PC-3 (cell line): ENCODE measurements at regions of chr15 and their contacts with region 1.

Region 1: GRCh38 chr15:80816049-80816655 is 37.0 kb downstream of the CEMIP start:
- DNase-seq: no peak
- ATAC-seq: no peak
- H3K4me3 ChIP-seq: no peak overlapping the region
- H3K27ac ChIP-seq: no peak overlapping the region
- H3K4me1 ChIP-seq: no peaks in the 10 kb centered on the region
- H3K27me3 ChIP-seq: no peaks in the 10 kb centered on the region
- CTCF ChIP-seq: no peak

Region 2: DNA sequence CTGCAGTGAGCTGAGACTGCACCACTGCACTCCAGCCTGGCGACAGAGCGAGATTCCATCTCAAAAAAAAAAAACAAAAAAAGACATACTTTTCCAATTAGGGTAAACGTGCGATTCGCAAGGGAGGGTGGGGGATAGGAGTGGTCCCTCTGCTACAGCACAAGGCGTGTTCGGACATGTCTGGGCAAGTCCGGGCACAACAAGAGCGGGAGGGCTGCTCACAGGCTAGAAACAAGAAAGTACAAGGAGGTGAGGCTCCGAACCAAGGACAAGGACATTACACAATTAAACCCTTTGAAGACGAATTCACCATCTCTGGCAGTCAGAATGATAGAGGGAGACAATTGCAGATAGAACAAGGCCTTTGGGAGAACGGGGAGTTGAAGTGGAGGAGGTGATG is 813.0 kb before region 1 on chr15:
- CTCF ChIA-PET with region 1: no interaction called
- POLR2A ChIA-PET with region 1: interaction called, 11 read pairs
- intact Hi-C with region 1: no loop called
- DNase-seq: no peak
- ATAC-seq: no peak
- H3K4me3 ChIP-seq: no peak overlapping the region
- H3K27ac ChIP-seq: no peak overlapping the region
- H3K4me1 ChIP-seq: no peaks in the 10 kb centered on the region
- H3K27me3 ChIP-seq: no peaks in the 10 kb centered on the region
- CTCF ChIP-seq: no peak

Region 3: DNA sequence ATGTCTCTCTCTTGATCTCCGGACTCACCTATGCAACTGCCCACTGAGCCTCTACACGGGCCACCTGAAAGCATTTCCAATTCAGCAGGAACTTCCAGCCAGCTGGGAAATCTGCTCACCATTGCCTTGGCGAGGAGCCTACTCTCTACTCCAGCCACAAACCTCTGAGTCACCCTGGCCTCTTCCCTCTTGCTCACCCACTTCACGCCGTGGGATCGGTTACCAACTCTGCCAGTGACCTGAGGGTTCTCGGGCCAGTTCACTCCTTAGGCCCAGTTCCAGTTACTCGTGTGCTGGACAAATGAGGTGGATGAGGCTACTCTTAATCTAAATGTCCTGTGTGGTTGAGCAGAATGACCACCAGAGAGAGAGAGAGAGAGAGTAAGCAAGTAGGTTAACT is 33.2 kb after region 1 on chr15:
- CTCF ChIA-PET with region 1: no interaction called
- POLR2A ChIA-PET with region 1: no interaction called
- intact Hi-C with region 1: no loop called
- DNase-seq: peak; percentile 93
- ATAC-seq: peak; percentile 55
- H3K4me3 ChIP-seq: no peak overlapping the region
- H3K27ac ChIP-seq: peak overlapping the region; percentile 86
- H3K4me1 ChIP-seq: peaks cover 82% of the 10 kb centered on the region
- H3K27me3 ChIP-seq: no peaks in the 10 kb centered on the region
- CTCF ChIP-seq: no peak